ENCODE measurements at regions of chr4 and their contacts with region 1.

Region 1: GRCh38 chr4:41160012-41160789 is 54.1 kb downstream of the APBB2 start:
- DNase-seq: peak; percentile 98
- H3K4me3 ChIP-seq: no peak overlapping the region
- H3K27ac ChIP-seq: peak overlapping the region; percentile 92
- H3K4me1 ChIP-seq: peaks cover 70% of the 10 kb centered on the region
- H3K27me3 ChIP-seq: no peaks in the 10 kb centered on the region
- CTCF ChIP-seq: no peak
- POLR2A ChIP-seq: peak; percentile 71

Region 2: DNA sequence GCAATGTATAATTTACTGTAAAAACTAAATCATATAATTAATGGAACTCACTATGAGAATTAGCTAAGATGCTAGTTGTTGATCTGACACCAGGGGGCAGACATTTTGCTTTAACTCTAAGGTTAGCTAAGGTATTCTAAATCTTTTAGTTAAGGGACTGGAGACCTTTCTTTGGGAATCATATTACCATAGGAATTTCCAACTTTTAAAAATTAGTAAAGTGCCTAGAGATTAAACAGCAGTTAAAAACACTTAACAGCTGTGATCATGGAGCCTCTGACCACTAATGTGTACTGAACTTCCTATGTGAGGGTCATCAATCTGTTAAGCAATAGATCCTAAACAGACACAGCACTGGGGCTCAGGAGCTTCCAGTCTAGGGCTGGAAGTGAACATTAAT is 183.9 kb before region 1 on chr4:
- CTCF ChIA-PET with region 1: interaction called, 21 read pairs
- POLR2A ChIA-PET with region 1: interaction called, 3 read pairs
- dilution Hi-C with region 1: no loop called
- intact Hi-C with region 1: loop called (anchors 1 kb)
- DNase-seq: peak; percentile 76
- H3K4me3 ChIP-seq: no peak overlapping the region
- H3K27ac ChIP-seq: peak overlapping the region; percentile 5
- H3K4me1 ChIP-seq: peaks cover 8% of the 10 kb centered on the region
- H3K27me3 ChIP-seq: no peaks in the 10 kb centered on the region
- CTCF ChIP-seq: peak; percentile 37 to 44
- POLR2A ChIP-seq: no peak

Region 3: GRCh38 chr4:41077628-41078027 is 82.6 kb before region 1 on chr4:
- CTCF ChIA-PET with region 1: interaction called, 3 read pairs
- POLR2A ChIA-PET with region 1: interaction called, 11 read pairs
- dilution Hi-C with region 1: no loop called
- intact Hi-C with region 1: no loop called
- DNase-seq: no peak
- H3K4me3 ChIP-seq: no peak overlapping the region
- H3K27ac ChIP-seq: no peak overlapping the region
- H3K4me1 ChIP-seq: no peaks in the 10 kb centered on the region
- H3K27me3 ChIP-seq: no peaks in the 10 kb centered on the region
- CTCF ChIP-seq: no peak
- POLR2A ChIP-seq: no peak

Region 4: GRCh38 chr4:41143311-41144039 is 16.7 kb before region 1 on chr4:
- CTCF ChIA-PET with region 1: interaction called, 15 read pairs
- POLR2A ChIA-PET with region 1: interaction called, 5 read pairs
- dilution Hi-C with region 1: no loop called
- intact Hi-C with region 1: loop called (anchors 1 kb)
- DNase-seq: peak; percentile 62
- H3K4me3 ChIP-seq: no peak overlapping the region
- H3K27ac ChIP-seq: peak overlapping the region; percentile 87
- H3K4me1 ChIP-seq: peaks cover 59% of the 10 kb centered on the region
- H3K27me3 ChIP-seq: no peaks in the 10 kb centered on the region
- CTCF ChIP-seq: no peak
- POLR2A ChIP-seq: no peak

Region 5: DNA sequence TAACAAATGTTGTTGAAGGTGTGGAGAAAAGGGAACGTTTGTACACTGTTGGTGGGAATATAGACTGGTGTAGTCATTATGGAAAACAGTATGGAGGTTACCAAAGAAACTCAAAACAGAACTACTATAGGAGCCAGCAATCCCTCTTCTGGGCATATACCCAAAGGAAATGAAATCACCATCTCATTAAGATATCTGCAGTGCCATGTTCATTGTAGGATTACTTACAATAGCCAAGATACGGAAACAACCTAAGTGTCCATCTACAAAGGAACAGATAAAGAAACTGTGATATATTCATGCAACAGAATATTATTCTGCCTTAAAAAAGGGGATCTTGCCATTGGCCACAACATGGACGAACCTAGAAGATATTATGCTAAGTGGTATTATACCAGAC is 31.9 kb after region 1 on chr4:
- CTCF ChIA-PET with region 1: interaction called, 9 read pairs
- POLR2A ChIA-PET with region 1: no interaction called
- dilution Hi-C with region 1: no loop called
- intact Hi-C with region 1: loop called (anchors 1 kb)
- DNase-seq: peak; percentile 86
- H3K4me3 ChIP-seq: no peak overlapping the region
- H3K27ac ChIP-seq: peak overlapping the region; percentile 53
- H3K4me1 ChIP-seq: peaks cover 26% of the 10 kb centered on the region
- H3K27me3 ChIP-seq: no peaks in the 10 kb centered on the region
- CTCF ChIP-seq: no peak
- POLR2A ChIP-seq: no peak

Region 6: GRCh38 chr4:41214136-41214824 is 54.1 kb after region 1 on chr4 and contains the start of gene APBB2:
- CTCF ChIA-PET with region 1: interaction called, 17 read pairs
- POLR2A ChIA-PET with region 1: interaction called, 6 read pairs
- dilution Hi-C with region 1: no loop called
- intact Hi-C with region 1: loop called (anchors 1 kb)
- DNase-seq: peak; percentile 98
- H3K4me3 ChIP-seq: peak within 1 kb of the TSS; percentile 85 to 96 (median 86)
- H3K27ac ChIP-seq: peak within 1 kb of the TSS; percentile 49
- H3K4me1 ChIP-seq: peaks cover 38% of the 10 kb centered on the region
- H3K27me3 ChIP-seq: no peaks in the 10 kb centered on the region
- CTCF ChIP-seq: peak; percentile 52 to 83
- POLR2A ChIP-seq: peak; percentile 93
- total RNA-seq, gene APBB2: 124 and 162 TPM in 2 replicates

Region 7: GRCh38 chr4:41806807-41807206 is 646.6 kb after region 1 on chr4:
- CTCF ChIA-PET with region 1: no interaction called
- POLR2A ChIA-PET with region 1: no interaction called
- dilution Hi-C with region 1: no loop called
- intact Hi-C with region 1: no loop called
- DNase-seq: no peak
- H3K4me3 ChIP-seq: no peak overlapping the region
- H3K27ac ChIP-seq: no peak overlapping the region
- H3K4me1 ChIP-seq: no peaks in the 10 kb centered on the region
- H3K27me3 ChIP-seq: peaks cover 8 to 9% of the 10 kb centered on the region in 2 experiments
- CTCF ChIP-seq: no peak
- POLR2A ChIP-seq: no peak